Activated T-helper 1 cell treated with anti-CD3 and anti-CD28 coated beads, Interleukin-12 subunit alpha, Interleukin-12 subunit beta, Interleukin-2, Interleukin-4 antibody, amounts not matched to agents 30 ng/mL and 10 ng/mL and 1 ng/mL, durations not matched to agents 14 hours and 24 hours and 36 hours (primary cell): ENCODE measurements at regions of chr17 and their contacts with region 1.

Region 1: DNA sequence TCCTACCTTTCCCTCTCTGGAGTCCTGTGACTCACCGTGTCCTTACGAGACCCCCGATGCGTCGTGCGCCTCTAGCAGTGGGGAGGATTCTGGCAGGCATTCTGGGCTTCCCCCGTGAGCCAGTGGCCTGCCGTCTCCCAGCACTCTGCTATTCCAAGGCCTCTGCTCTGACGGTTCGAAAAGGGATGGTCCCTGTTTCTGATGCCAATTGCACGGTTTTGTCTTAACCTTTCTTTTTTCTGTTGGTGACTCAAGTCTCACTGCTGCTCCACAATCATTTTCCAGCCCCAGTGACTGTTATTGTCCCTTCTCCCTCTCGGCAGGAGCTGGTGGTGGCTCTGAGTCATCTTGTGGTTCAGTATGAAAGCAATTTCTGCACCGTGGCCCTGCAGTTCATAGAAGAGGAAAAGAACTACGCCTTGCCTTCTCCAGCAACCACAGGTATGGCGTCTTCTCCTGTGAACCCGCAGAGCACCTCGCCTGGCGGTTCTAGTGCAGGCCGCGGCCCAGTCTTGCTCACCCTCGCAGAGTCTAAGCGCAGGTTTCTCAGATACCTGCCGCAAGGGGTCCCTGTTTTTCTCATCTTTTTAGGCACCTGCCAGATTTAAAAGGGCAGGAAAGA is 100.1 kb upstream of the CHMP6 start:
- DNase-seq: peak; percentile 79
- H3K4me3 Mint-ChIP-seq: peak overlapping the region; percentile 73
- H3K27ac Mint-ChIP-seq: peak overlapping the region; percentile 87
- H3K4me1 Mint-ChIP-seq: peaks cover 73% of the 10 kb centered on the region
- H3K27me3 Mint-ChIP-seq: no peaks in the 10 kb centered on the region

Region 2: DNA sequence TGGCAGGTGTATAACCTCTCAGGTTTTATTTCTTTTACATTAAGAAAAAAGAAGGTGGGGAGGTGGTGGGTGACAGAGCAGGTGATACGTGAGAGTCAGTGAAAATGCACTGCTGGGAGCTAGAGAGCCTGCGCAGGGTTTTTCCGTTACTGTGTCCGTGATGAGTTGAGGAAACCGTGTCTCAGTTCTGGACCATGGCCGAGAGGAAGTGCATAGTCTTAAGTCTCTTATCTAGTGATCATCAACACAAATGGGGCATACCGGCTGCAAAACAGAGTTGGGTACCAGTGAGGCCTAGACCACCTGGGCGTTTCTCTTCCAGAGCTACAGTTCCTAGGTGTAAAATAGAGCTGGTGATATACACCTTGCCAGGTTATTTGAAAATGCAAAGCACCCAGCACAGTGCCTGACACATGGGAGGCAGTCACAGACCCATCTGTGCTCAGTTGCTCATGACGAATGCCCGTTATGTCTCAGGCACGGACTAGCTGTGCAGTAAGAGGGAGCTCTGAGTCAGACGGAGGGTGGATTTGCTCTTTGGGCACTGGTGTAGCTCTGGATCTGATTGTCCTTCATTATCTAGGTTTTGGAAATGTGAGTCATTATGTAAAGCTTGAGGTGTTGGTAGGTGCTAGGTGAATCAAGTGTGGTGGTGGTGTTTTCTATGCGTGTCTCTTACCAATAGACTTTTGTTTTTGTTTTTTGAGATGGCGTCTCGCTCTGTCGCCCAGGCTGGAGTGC is 286.0 kb before region 1 on chr17:
- intact Hi-C with region 1: loop called (anchors 1 kb)
- DNase-seq: peak; percentile 31
- H3K4me3 Mint-ChIP-seq: no peak overlapping the region
- H3K27ac Mint-ChIP-seq: peak overlapping the region; percentile 35
- H3K4me1 Mint-ChIP-seq: peaks cover 66% of the 10 kb centered on the region
- H3K27me3 Mint-ChIP-seq: peaks cover 2% of the 10 kb centered on the region

Region 3: GRCh38 chr17:80737106-80738019 is 154.1 kb before region 1 on chr17:
- intact Hi-C with region 1: no loop called
- DNase-seq: no peak
- H3K4me3 Mint-ChIP-seq: no peak overlapping the region
- H3K27ac Mint-ChIP-seq: peak overlapping the region; percentile 20
- H3K4me1 Mint-ChIP-seq: peaks cover 79% of the 10 kb centered on the region
- H3K27me3 Mint-ChIP-seq: no peaks in the 10 kb centered on the region

Region 4: GRCh38 chr17:80780381-80781198 is 110.9 kb before region 1 on chr17:
- intact Hi-C with region 1: loop called (anchors 2 kb)
- DNase-seq: no peak
- H3K4me3 Mint-ChIP-seq: peak overlapping the region; percentile 75
- H3K27ac Mint-ChIP-seq: peak overlapping the region; percentile 94
- H3K4me1 Mint-ChIP-seq: peaks cover 86% of the 10 kb centered on the region
- H3K27me3 Mint-ChIP-seq: no peaks in the 10 kb centered on the region

Region 5: GRCh38 chr17:80855948-80856862 is 35.3 kb before region 1 on chr17:
- intact Hi-C with region 1: loop called (anchors 1 kb)
- DNase-seq: peak; percentile 85
- H3K4me3 Mint-ChIP-seq: peak overlapping the region; percentile 61
- H3K27ac Mint-ChIP-seq: peak overlapping the region; percentile 96
- H3K4me1 Mint-ChIP-seq: peaks cover 80% of the 10 kb centered on the region
- H3K27me3 Mint-ChIP-seq: no peaks in the 10 kb centered on the region

Region 6: DNA sequence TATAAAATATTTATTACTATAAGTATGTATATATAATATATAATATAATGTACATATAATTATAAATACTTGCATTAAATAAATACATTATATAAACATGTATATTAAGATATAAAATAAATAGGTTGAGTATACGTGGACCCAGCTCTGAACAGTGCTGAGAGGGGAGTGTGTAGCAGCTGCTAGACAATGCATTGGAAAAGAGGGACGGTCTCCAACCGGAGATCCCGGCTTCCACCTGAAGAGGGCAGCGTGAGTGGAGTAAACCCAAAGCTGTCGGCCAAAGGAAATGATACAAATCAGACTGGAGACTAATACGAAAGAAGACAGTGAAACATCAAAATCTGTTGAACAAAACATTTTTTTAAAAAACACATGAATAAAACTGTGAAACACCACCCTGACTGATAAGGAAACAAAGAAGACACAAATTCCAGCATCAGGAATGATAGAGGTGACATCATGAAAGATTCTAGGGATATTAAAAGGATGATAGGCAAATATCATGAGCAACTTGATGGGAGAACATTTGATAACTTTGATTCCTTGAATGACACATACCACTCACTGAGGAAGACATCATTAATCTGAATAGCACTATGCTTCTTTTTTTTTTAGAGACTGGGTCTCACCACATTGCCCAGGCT is 25.2 kb before region 1 on chr17:
- intact Hi-C with region 1: loop called (anchors 1 kb)
- DNase-seq: peak; percentile 62
- H3K4me3 Mint-ChIP-seq: peak overlapping the region; percentile 48
- H3K27ac Mint-ChIP-seq: peak overlapping the region; percentile 84
- H3K4me1 Mint-ChIP-seq: peaks cover 88% of the 10 kb centered on the region
- H3K27me3 Mint-ChIP-seq: no peaks in the 10 kb centered on the region

Region 7: GRCh38 chr17:80876950-80877728 is 14.4 kb before region 1 on chr17:
- intact Hi-C with region 1: loop called (anchors 1 kb)
- DNase-seq: peak; percentile 64
- H3K4me3 Mint-ChIP-seq: peak overlapping the region; percentile 65
- H3K27ac Mint-ChIP-seq: peak overlapping the region; percentile 96
- H3K4me1 Mint-ChIP-seq: peaks cover 55% of the 10 kb centered on the region
- H3K27me3 Mint-ChIP-seq: no peaks in the 10 kb centered on the region

Region 8: DNA sequence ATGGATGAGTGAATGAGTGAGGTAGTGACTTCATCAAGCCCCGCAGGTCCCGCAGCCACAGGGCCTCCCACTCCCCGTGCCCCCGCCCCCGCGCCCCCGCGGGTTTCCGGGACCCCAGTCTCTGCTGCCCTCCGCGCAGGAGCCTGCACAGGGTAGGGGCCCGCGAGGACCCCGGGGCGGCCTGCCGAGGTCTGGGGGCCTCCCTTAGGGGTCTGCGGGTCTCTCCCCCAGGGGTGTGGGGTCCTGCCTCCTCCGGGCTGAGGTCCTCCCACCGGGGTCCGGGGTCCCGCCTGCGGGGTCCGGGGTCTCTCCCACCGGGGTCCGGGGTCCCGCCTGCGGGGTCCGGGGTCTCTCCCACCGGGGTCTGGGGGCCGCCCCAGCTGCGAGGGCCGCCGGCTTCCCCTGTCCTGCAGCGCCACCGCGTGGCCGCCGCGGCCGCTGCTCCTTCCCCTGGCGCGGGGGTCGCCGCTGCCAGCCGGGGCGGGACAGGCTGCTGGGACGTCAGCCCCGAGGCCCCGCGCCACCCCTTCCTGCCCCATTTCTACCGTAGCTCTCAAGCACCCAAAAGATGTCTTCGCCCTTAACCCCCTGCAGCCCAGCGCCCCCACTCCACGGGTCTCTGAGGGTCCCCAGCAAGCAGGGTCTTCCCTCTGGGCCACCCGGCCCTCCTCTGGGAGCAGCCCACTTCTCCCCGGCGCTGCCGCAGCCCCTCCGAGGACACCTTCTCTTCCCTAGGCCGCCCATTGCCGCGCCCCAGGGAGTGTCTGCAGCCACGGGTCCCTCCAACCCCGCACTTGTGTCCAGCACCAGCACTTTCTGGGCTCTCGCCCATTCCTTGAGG is 89.8 kb after region 1 on chr17:
- intact Hi-C with region 1: loop called (anchors 1 kb)
- DNase-seq: no peak
- H3K4me3 Mint-ChIP-seq: no peak overlapping the region
- H3K27ac Mint-ChIP-seq: no peak overlapping the region
- H3K4me1 Mint-ChIP-seq: peaks cover 11% of the 10 kb centered on the region
- H3K27me3 Mint-ChIP-seq: peaks cover 9% of the 10 kb centered on the region